ENCODE measurements at regions of chr17 and their contacts with region 1.

Region 1: GRCh38 chr17:39872751-39873150 is 4.7 kb downstream of the ZPBP2 start:
- DNase-seq: peak; percentile 19
- H3K4me3 ChIP-seq: no peak overlapping the region
- H3K27ac ChIP-seq: no peak overlapping the region
- H3K4me1 ChIP-seq: no peaks in the 10 kb centered on the region
- H3K27me3 ChIP-seq: peaks cover 16 to 31% of the 10 kb centered on the region in 2 experiments
- CTCF ChIP-seq: no peak
- POLR2A ChIP-seq: no peak

Region 2: DNA sequence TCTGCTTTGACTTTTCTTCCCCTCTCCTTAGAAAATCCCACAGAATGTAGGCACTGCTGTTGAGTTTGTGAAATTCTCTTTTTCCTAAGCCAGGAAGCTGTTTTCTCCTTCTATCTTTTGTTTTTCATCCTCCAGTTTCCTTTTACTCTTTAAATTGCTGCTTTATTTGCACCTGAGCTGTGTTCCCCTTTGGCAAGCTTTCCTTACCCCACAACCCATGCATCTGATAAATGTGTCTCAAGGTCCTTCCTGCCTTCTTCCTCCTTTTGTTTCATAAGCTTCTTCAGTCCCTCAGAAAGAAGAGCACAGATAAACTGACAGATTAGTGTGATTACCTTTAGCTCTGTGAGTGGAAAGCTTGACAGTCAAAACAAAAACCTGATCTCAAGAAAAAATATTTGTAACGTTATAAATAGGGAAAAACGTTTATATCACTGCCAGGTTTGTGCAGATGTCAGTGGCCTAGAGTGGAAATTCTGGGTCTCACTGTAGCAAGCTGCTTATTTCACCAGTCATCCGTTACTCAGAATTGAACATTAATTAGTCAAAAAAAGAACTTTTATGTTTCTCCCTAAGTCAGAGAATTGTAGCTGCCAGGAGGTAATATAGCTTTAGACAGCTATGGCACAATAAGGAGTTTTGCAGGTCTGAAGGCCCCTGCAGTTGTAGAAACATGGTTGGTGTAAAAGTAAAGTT is 22.1 kb after region 1 on chr17:
- CTCF ChIA-PET with region 1: interaction called, 13 read pairs
- POLR2A ChIA-PET with region 1: no interaction called
- dilution Hi-C with region 1: no loop called
- intact Hi-C with region 1: no loop called
- DNase-seq: peak; percentile 2
- H3K4me3 ChIP-seq: no peak overlapping the region
- H3K27ac ChIP-seq: no peak overlapping the region
- H3K4me1 ChIP-seq: no peaks in the 10 kb centered on the region
- H3K27me3 ChIP-seq: peaks cover 2 to 12% of the 10 kb centered on the region in 2 experiments
- CTCF ChIP-seq: no peak
- POLR2A ChIP-seq: no peak

Region 3: DNA sequence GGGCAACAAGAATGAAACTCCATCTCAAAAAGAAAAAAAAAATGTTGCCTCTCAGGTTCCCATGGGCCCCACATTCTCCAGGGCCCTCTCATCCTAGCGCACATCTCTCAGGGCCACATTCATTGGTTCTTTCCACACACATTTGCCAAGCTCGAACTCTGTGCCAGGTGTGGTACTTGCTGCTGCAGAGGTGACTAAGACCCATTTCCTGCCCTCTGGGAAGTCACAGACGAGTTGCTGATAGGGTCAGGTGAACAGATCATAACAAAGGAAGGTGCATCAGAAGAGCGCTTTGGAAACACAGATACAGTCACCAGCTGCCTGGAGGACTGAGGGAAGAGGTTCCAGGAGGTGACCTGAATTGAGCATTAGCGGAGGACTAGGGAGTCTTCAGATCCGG is 91.1 kb after region 1 on chr17:
- CTCF ChIA-PET with region 1: interaction called, 12 read pairs
- POLR2A ChIA-PET with region 1: no interaction called
- dilution Hi-C with region 1: no loop called
- intact Hi-C with region 1: loop called (anchors 2 kb)
- DNase-seq: no peak
- H3K4me3 ChIP-seq: no peak overlapping the region
- H3K27ac ChIP-seq: no peak overlapping the region
- H3K4me1 ChIP-seq: no peaks in the 10 kb centered on the region
- H3K27me3 ChIP-seq: peaks cover 4% of the 10 kb centered on the region in 2 experiments
- CTCF ChIP-seq: no peak
- POLR2A ChIP-seq: no peak